ENCODE measurements at regions of chr12 and their contacts with region 1.

Region 1: GRCh38 chr12:69900720-69901131 is 75.7 kb downstream of the MYRFL start:
- DNase-seq: peak; percentile 75
- ATAC-seq: peak; percentile 21
- H3K4me3 Mint-ChIP-seq: no peak overlapping the region
- H3K27ac Mint-ChIP-seq: no peak overlapping the region
- H3K4me1 Mint-ChIP-seq: peaks cover 50% of the 10 kb centered on the region
- H3K27me3 Mint-ChIP-seq: no peaks in the 10 kb centered on the region
- CTCF ChIP-seq: peak; percentile 94

Region 2: GRCh38 chr12:69932676-69933552 is 32.2 kb after region 1 on chr12:
- CTCF ChIA-PET with region 1: interaction called, 11 read pairs
- POLR2A ChIA-PET with region 1: no interaction called
- DNase-seq: peak; percentile 82
- ATAC-seq: peak; percentile 76
- H3K4me3 Mint-ChIP-seq: peak overlapping the region; percentile 37
- H3K27ac Mint-ChIP-seq: peak overlapping the region; percentile 94
- H3K4me1 Mint-ChIP-seq: peaks cover 82% of the 10 kb centered on the region
- H3K27me3 Mint-ChIP-seq: no peaks in the 10 kb centered on the region
- CTCF ChIP-seq: no peak

Region 3: GRCh38 chr12:69947897-69948296 is 47.2 kb after region 1 on chr12:
- CTCF ChIA-PET with region 1: interaction called, 16 read pairs
- POLR2A ChIA-PET with region 1: interaction called, 3 read pairs
- DNase-seq: no peak
- ATAC-seq: no peak
- H3K4me3 Mint-ChIP-seq: no peak overlapping the region
- H3K27ac Mint-ChIP-seq: no peak overlapping the region
- H3K4me1 Mint-ChIP-seq: peaks cover 35% of the 10 kb centered on the region
- H3K27me3 Mint-ChIP-seq: no peaks in the 10 kb centered on the region
- CTCF ChIP-seq: no peak

Measured in WTC11 (cell line).